ENCODE measurements at regions of chr7 and their contacts with region 1.

Region 1: GRCh38 chr7:143410521-143411004 is 1.9 kb upstream of the EPHA1 start:
- DNase-seq: peak; percentile 82

Region 2: GRCh38 chr7:142371586-142372377 is 1038.8 kb before region 1 on chr7:
- intact Hi-C with region 1: loop called in 1 of 2 experiments (anchors 5 kb)
- DNase-seq: no peak

Region 3: GRCh38 chr7:143375298-143376034 is 35.1 kb before region 1 on chr7:
- intact Hi-C with region 1: loop called in 1 of 2 experiments (anchors 5 kb)
- DNase-seq: peak; percentile 46